A549 (cell line): ENCODE measurements at regions of chr5 and their contacts with region 1.

Region 1: DNA sequence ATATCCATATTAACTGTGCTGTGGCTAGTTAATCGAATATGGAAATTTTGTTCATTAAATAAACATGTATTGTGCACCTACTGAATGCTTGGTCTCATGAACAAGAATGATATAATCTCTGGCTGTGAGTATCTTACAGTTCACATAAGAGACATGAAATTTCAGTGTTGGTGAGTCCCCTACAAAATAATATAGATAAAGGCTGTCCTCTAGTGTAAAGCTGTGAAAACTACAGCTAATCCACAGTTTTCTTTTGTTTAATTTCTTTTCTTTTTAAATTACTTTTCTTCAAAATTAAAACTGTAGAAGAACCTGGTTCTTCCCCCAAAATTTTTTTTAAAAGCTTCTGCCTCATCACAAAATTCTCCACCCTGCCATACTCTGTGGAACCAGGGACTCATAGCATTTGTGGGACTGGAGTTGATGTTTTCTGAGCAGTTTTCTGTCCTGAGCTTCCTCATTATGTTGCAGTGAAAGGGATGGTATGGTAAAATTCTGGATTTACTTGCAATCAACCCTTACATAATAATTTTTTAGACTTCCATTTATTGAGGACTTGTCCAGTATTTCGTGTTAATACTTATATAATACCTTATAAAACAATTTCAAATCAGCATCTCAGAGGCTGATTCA is 135.0 kb downstream of the STK32A start:
- DNase-seq: peak; percentile 15 to 20
- ATAC-seq: peak; percentile 47 to 66; a peak in 2 of 6 replicates
- H3K4me3 ChIP-seq: no peak overlapping the region
- H3K27ac ChIP-seq: no peak overlapping the region
- H3K4me1 ChIP-seq: no peaks in the 10 kb centered on the region
- CTCF ChIP-seq: peak; percentile 64
- EP300 ChIP-seq: no peak
- POLR2A ChIP-seq: no peak
- RAD21 ChIP-seq: peak; percentile 76 to 84

Region 2: DNA sequence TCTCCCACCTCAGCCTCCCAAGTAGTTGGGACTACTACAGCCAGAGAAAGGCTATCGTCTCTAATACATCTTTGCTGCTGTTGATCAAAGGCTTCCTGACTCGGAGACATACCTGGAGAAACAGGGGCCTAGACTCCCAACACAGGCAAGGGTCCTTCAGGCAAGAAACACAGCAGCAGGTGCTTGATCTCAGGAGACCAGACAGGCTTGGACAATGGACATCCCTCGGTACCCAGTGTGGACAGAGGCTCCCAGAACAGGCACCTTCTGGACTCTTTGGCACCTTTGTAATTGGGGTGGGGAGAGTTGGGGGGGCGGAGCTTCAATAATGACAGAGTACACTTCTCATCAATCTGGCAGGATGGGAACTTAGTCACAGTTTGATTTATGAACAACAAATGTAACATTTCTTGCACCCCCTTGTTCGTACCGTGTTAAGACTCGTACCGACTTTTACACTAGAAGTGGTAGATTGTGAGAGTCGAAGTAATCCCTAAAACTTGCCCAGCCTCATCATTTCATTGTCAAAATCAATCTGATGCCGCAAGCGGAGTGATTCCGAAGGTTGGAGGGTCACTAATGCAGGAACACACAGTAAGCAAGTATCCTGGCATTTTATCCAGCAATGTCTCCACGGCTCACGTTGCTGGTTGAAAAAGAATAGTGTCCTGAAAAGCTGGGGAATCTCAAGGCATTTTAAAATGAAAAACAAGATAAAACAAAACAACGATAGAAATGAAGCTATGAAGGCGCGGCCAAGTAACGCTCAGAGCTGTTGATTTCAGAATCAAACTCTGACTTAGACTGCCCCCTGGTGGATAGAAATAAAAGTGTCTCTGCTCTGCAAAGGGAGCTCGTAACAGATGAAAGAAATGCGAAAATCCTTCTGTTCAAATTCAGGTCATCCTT is 181.4 kb before region 1 on chr5:
- CTCF ChIA-PET with region 1: interaction called, 10 read pairs
- POLR2A ChIA-PET with region 1: no interaction called
- DNase-seq: peak; percentile 52 to 59
- ATAC-seq: peak; percentile 87 to 95
- H3K4me3 ChIP-seq: no peak overlapping the region
- H3K27ac ChIP-seq: no peak overlapping the region
- H3K4me1 ChIP-seq: no peaks in the 10 kb centered on the region
- CTCF ChIP-seq: peak; percentile 83
- EP300 ChIP-seq: no peak
- POLR2A ChIP-seq: no peak
- RAD21 ChIP-seq: peak; percentile 75 to 78

Region 3: GRCh38 chr5:147223948-147224791 is 145.7 kb before region 1 on chr5:
- CTCF ChIA-PET with region 1: interaction called, 65 read pairs
- POLR2A ChIA-PET with region 1: interaction called, 4 read pairs
- DNase-seq: peak; percentile 27 to 38
- ATAC-seq: peak; percentile 79 to 92; a peak in 5 of 6 replicates
- H3K4me3 ChIP-seq: no peak overlapping the region
- H3K27ac ChIP-seq: no peak overlapping the region
- H3K4me1 ChIP-seq: no peaks in the 10 kb centered on the region
- CTCF ChIP-seq: peak; percentile 63
- EP300 ChIP-seq: no peak
- POLR2A ChIP-seq: no peak
- RAD21 ChIP-seq: peak; percentile 78 to 79

Region 4: DNA sequence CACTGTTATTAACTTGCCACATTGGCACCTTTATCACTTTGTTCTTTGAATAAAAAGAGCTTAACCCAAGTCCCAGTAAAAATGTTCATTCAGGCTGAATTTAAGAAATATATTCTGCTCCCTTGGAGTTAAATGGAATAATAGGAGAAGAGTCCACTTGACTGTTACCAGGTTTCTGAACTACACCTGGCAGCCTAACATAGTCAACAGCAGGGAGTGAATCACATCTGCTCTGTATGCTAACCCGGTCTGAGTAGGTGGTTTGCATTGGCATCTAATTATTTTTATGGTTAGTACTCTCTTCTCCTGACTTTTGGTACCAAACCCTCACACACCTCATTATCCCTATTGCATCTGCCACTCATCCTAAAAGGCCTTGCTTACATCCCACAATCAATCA is 48.3 kb before region 1 on chr5:
- CTCF ChIA-PET with region 1: no interaction called
- POLR2A ChIA-PET with region 1: no interaction called
- DNase-seq: no peak
- ATAC-seq: no peak
- H3K4me3 ChIP-seq: no peak overlapping the region
- H3K27ac ChIP-seq: no peak overlapping the region
- H3K4me1 ChIP-seq: no peaks in the 10 kb centered on the region
- CTCF ChIP-seq: no peak
- EP300 ChIP-seq: no peak
- POLR2A ChIP-seq: no peak
- RAD21 ChIP-seq: no peak

Region 5: GRCh38 chr5:147382776-147383175 is 12.9 kb after region 1 on chr5:
- CTCF ChIA-PET with region 1: interaction called, 10 read pairs
- POLR2A ChIA-PET with region 1: no interaction called
- DNase-seq: no peak
- ATAC-seq: no peak
- H3K4me3 ChIP-seq: no peak overlapping the region
- H3K27ac ChIP-seq: no peak overlapping the region
- H3K4me1 ChIP-seq: no peaks in the 10 kb centered on the region
- CTCF ChIP-seq: no peak
- EP300 ChIP-seq: no peak
- POLR2A ChIP-seq: no peak
- RAD21 ChIP-seq: no peak

Region 6: GRCh38 chr5:147576646-147577535 is 207.0 kb after region 1 on chr5:
- CTCF ChIA-PET with region 1: interaction called, 19 read pairs
- POLR2A ChIA-PET with region 1: no interaction called
- DNase-seq: peak; percentile 12 to 40
- ATAC-seq: peak; percentile 73 to 90; a peak in 5 of 6 replicates
- H3K4me3 ChIP-seq: no peak overlapping the region
- H3K27ac ChIP-seq: no peak overlapping the region
- H3K4me1 ChIP-seq: no peaks in the 10 kb centered on the region
- CTCF ChIP-seq: peak; percentile 68
- EP300 ChIP-seq: no peak
- POLR2A ChIP-seq: no peak
- RAD21 ChIP-seq: peak; percentile 49 to 57